CD4-positive, alpha-beta T cell (primary cell): ENCODE measurements at regions of chr4 and their contacts with region 1.

Region 1: GRCh38 chr4:112327965-112328733 is 31.0 kb downstream of the ALPK1 start:
- DNase-seq: peak in 3 of 14 experiments; percentile 64 to 71 (median 68)
- ATAC-seq: peak; percentile 60
- H3K4me3 ChIP-seq: no peak overlapping the region
- H3K4me3 Mint-ChIP-seq: no peak overlapping the region
- H3K27ac ChIP-seq: no peak overlapping the region
- H3K27ac Mint-ChIP-seq: no peak overlapping the region
- H3K4me1 ChIP-seq: no peaks in the 10 kb centered on the region
- H3K4me1 Mint-ChIP-seq: peaks cover 5% of the 10 kb centered on the region
- H3K27me3 ChIP-seq: no peaks in the 10 kb centered on the region
- H3K27me3 Mint-ChIP-seq: no peaks in the 10 kb centered on the region
- CTCF ChIP-seq: peak; percentile 41

Region 2: GRCh38 chr4:112523764-112524505 is 195.8 kb after region 1 on chr4:
- CTCF ChIA-PET with region 1: interaction called, 3 read pairs
- POLR2A ChIA-PET with region 1: interaction called, 3 read pairs
- intact Hi-C with region 1: loop called (anchors 1 to 2 kb)
- DNase-seq: peak; percentile 49 to 83 (median 70)
- ATAC-seq: peak; percentile 82
- H3K4me3 ChIP-seq: peak overlapping the region; percentile 51
- H3K4me3 Mint-ChIP-seq: peak overlapping the region; percentile 89
- H3K27ac ChIP-seq: no peak overlapping the region
- H3K27ac Mint-ChIP-seq: no peak overlapping the region
- H3K4me1 ChIP-seq: peaks cover 35% of the 10 kb centered on the region
- H3K4me1 Mint-ChIP-seq: peaks cover 51% of the 10 kb centered on the region
- H3K27me3 ChIP-seq: peaks cover 50 to 51% of the 10 kb centered on the region in 2 experiments
- H3K27me3 Mint-ChIP-seq: peaks cover 78% of the 10 kb centered on the region
- CTCF ChIP-seq: peak; percentile 74

Region 3: GRCh38 chr4:112604589-112604988 is 276.4 kb after region 1 on chr4:
- CTCF ChIA-PET with region 1: no interaction called
- POLR2A ChIA-PET with region 1: no interaction called
- intact Hi-C with region 1: loop called (anchors 1 to 2 kb)
- DNase-seq: peak in 12 of 14 experiments; percentile 4 to 65 (median 12)
- ATAC-seq: peak; percentile 63
- H3K4me3 ChIP-seq: no peak overlapping the region
- H3K4me3 Mint-ChIP-seq: no peak overlapping the region
- H3K27ac ChIP-seq: no peak overlapping the region
- H3K27ac Mint-ChIP-seq: no peak overlapping the region
- H3K4me1 ChIP-seq: no peaks in the 10 kb centered on the region
- H3K4me1 Mint-ChIP-seq: peaks cover 4% of the 10 kb centered on the region
- H3K27me3 ChIP-seq: no peaks in the 10 kb centered on the region
- H3K27me3 Mint-ChIP-seq: no peaks in the 10 kb centered on the region
- CTCF ChIP-seq: peak; percentile 66

Region 4: DNA sequence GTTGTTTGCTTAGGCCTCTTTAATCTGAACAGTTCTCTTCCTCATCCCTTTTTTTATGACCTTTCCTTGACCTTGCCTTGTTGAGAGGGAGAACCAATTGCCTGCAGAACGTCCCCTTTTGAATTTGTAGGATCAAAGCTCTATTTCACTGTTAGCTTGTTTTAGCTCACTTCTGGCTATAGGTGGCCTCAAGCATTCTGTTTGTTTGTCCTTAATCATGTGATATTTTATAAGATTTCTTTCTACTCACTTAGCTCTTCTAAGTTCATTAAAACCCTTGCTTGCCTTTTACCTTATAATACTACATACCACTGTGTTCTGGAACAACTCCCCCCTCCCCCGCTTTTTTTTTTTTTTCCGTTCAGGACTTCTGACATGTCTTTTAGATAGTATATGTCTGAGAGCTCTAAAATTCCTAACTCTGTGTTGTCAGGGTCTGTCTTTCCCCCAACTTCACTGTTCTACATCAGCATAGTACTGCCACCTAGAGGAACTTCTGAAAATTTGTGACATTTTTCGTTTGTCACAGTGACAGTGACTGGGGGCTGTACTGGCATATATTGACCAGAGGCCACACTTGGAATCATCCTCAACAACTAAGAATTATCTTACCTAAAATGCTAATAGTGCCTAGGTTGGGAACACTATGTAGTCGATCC is 437.3 kb after region 1 on chr4:
- CTCF ChIA-PET with region 1: interaction called, 3 read pairs
- POLR2A ChIA-PET with region 1: no interaction called
- intact Hi-C with region 1: loop called (anchors 5 kb)
- DNase-seq: peak in 3 of 14 experiments; percentile 3 to 22 (median 11)
- ATAC-seq: no peak
- H3K4me3 ChIP-seq: no peak overlapping the region
- H3K4me3 Mint-ChIP-seq: no peak overlapping the region
- H3K27ac ChIP-seq: no peak overlapping the region
- H3K27ac Mint-ChIP-seq: no peak overlapping the region
- H3K4me1 ChIP-seq: no peaks in the 10 kb centered on the region
- H3K4me1 Mint-ChIP-seq: no peaks in the 10 kb centered on the region
- H3K27me3 ChIP-seq: no peaks in the 10 kb centered on the region
- H3K27me3 Mint-ChIP-seq: peaks cover 14% of the 10 kb centered on the region
- CTCF ChIP-seq: peak; percentile 29

Region 5: GRCh38 chr4:112938461-112939058 is 610.4 kb after region 1 on chr4:
- CTCF ChIA-PET with region 1: no interaction called
- POLR2A ChIA-PET with region 1: no interaction called
- intact Hi-C with region 1: loop called (anchors 5 kb)
- DNase-seq: peak in 3 of 14 experiments; percentile 7 to 9 (median 8)
- ATAC-seq: no peak
- H3K4me3 ChIP-seq: no peak overlapping the region
- H3K4me3 Mint-ChIP-seq: no peak overlapping the region
- H3K27ac ChIP-seq: no peak overlapping the region
- H3K27ac Mint-ChIP-seq: no peak overlapping the region
- H3K4me1 ChIP-seq: no peaks in the 10 kb centered on the region
- H3K4me1 Mint-ChIP-seq: no peaks in the 10 kb centered on the region
- H3K27me3 ChIP-seq: peaks cover 0 to 13% of the 10 kb centered on the region in 2 experiments
- H3K27me3 Mint-ChIP-seq: peaks cover 28% of the 10 kb centered on the region
- CTCF ChIP-seq: peak; percentile 50

Region 6: DNA sequence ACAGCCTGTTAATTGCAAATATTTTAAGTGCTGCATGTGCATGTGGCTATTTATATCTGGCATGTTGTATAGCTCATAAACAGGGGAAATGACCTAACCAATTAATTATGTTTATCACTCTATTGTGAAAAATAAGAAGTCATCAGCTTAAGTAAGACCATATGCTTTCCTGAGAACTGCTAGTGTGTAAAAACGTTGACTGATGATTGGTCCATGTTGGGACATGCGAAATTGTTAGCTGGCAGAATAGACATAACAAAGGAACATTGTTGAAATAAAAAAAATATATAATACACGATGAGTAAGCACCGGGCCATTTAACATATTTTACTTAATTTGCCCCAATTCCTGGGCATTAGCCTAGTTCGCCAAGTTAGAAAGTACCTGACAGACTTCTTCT is 928.8 kb after region 1 on chr4:
- CTCF ChIA-PET with region 1: no interaction called
- POLR2A ChIA-PET with region 1: no interaction called
- intact Hi-C with region 1: no loop called
- DNase-seq: no peak
- ATAC-seq: no peak
- H3K4me3 ChIP-seq: no peak overlapping the region
- H3K4me3 Mint-ChIP-seq: no peak overlapping the region
- H3K27ac ChIP-seq: no peak overlapping the region
- H3K27ac Mint-ChIP-seq: no peak overlapping the region
- H3K4me1 ChIP-seq: no peaks in the 10 kb centered on the region
- H3K4me1 Mint-ChIP-seq: no peaks in the 10 kb centered on the region
- H3K27me3 ChIP-seq: peaks cover 0 to 3% of the 10 kb centered on the region in 2 experiments
- H3K27me3 Mint-ChIP-seq: peaks cover 15% of the 10 kb centered on the region
- CTCF ChIP-seq: no peak